ENCODE measurements at regions of chr14 and their contacts with region 1.

Region 1: GRCh38 chr14:70208380-70208779 is 19.6 kb upstream of the SLC8A3 start:
- DNase-seq: no peak
- H3K4me3 ChIP-seq: no peak overlapping the region
- H3K27ac ChIP-seq: no peak overlapping the region
- H3K4me1 ChIP-seq: no peaks in the 10 kb centered on the region
- H3K27me3 ChIP-seq: peaks cover 12% of the 10 kb centered on the region
- CTCF ChIP-seq: no peak
- EP300 ChIP-seq: no peak
- POLR2A ChIP-seq: no peak

Region 2: GRCh38 chr14:71309753-71310152 is 1101.4 kb after region 1 on chr14:
- in situ Hi-C with region 1: no loop called
- intact Hi-C with region 1: no loop called
- DNase-seq: no peak
- H3K4me3 ChIP-seq: no peak overlapping the region
- H3K27ac ChIP-seq: no peak overlapping the region
- H3K4me1 ChIP-seq: no peaks in the 10 kb centered on the region
- H3K27me3 ChIP-seq: no peaks in the 10 kb centered on the region
- CTCF ChIP-seq: peak in 2 of 5 experiments; percentile 3 to 9
- EP300 ChIP-seq: no peak
- POLR2A ChIP-seq: no peak

Region 3: DNA sequence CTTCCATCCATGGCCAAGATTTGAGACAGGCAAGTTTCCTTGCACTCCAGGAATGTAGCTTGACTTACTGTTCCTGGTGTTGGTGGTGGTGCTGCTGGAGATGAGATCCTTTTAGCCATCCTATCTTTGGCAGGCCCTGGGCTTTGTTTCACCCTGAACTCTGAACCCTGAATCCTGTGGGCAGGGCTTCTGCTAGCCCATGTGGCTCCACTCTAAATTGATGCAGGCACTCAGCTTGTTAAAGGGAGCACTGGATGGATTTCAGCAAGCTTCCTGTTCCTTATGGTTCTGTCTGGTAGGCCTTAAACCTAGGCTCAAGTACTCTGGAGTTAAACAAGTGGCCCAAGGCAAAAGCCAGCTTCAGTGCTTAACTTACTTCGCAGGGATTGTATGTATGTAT is 1862.1 kb after region 1 on chr14:
- in situ Hi-C with region 1: no loop called
- intact Hi-C with region 1: loop called (anchors 5 kb)
- DNase-seq: no peak
- H3K4me3 ChIP-seq: no peak overlapping the region
- H3K27ac ChIP-seq: no peak overlapping the region
- H3K4me1 ChIP-seq: no peaks in the 10 kb centered on the region
- H3K27me3 ChIP-seq: no peaks in the 10 kb centered on the region
- CTCF ChIP-seq: no peak
- EP300 ChIP-seq: no peak
- POLR2A ChIP-seq: no peak

Measured in transverse colon (tissue), 4 donors.